ENCODE measurements at regions of chr17 and their contacts with region 1.

Region 1: GRCh38 chr17:48791128-48792032 is 25.6 kb downstream of the TTLL6 start:
- H3K4me3 ChIP-seq: no peak overlapping the region
- H3K27ac ChIP-seq: no peak overlapping the region
- H3K4me1 ChIP-seq: no peaks in the 10 kb centered on the region
- CTCF ChIP-seq: peak; percentile 70; the same call in 1 of the 2 replicates

Region 2: GRCh38 chr17:48747445-48748363 is 43.7 kb before region 1 on chr17:
- CTCF ChIA-PET with region 1: interaction called, 10 read pairs
- POLR2A ChIA-PET with region 1: no interaction called
- H3K4me3 ChIP-seq: no peak overlapping the region
- H3K27ac ChIP-seq: no peak overlapping the region
- H3K4me1 ChIP-seq: 0 out of 2 replicates have a peak, but pooled peaks cover 2% of the 10 kb centered on the region
- CTCF ChIP-seq: no peak

Region 3: GRCh38 chr17:48767263-48767774 is 24.1 kb before region 1 on chr17:
- CTCF ChIA-PET with region 1: interaction called, 35 read pairs
- POLR2A ChIA-PET with region 1: interaction called, 3 read pairs
- H3K4me3 ChIP-seq: no peak overlapping the region
- H3K27ac ChIP-seq: no peak overlapping the region
- H3K4me1 ChIP-seq: no peaks in the 10 kb centered on the region
- CTCF ChIP-seq: no peak

Region 4: DNA sequence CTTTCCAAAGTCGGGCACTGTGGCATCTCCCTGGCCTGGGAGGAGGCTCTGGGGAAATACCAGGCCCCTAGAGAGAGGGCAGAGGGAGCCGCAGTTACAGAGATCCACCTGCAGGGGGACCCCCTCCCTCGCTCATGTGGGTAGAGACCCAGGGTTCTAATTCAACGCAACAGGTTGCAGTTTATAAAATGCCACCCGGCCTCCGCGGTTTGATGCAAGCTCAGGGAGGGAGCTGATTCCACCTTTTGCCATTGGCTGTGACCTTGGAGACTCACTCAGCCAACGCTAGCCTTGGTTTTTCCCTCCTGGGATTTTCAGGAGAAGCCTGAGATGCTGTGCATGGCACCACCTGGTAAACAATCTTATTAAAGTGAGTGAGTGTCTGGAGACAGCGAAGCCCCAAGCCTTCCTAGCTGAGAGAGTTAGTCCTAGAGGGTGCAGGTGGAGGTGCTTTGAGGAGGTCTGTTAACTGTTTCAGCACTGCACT is 13.6 kb after region 1 on chr17:
- CTCF ChIA-PET with region 1: interaction called, 44 read pairs
- POLR2A ChIA-PET with region 1: no interaction called
- H3K4me3 ChIP-seq: no peak overlapping the region
- H3K27ac ChIP-seq: no peak overlapping the region
- H3K4me1 ChIP-seq: peaks cover 4% of the 10 kb centered on the region
- CTCF ChIP-seq: peak; percentile 76

Measured in HEK293 (cell line).